Psoas muscle (tissue), 8 donors: ENCODE measurements at regions of chr17 and their contacts with region 1.

Region 1: GRCh38 chr17:51537996-51538550 is 277.7 kb downstream of the UTP18 start:
- DNase-seq: no peak
- ATAC-seq: no peak
- H3K4me3 ChIP-seq: no peak overlapping the region
- H3K27ac ChIP-seq: no peak overlapping the region
- H3K4me1 ChIP-seq: no peaks in the 10 kb centered on the region
- H3K27me3 ChIP-seq: no peaks in the 10 kb centered on the region
- CTCF ChIP-seq: no peak

Region 2: GRCh38 chr17:51298508-51299371 is 239.3 kb before region 1 on chr17:
- intact Hi-C with region 1: loop called in 1 of 2 experiments (anchors 2 kb)
- DNase-seq: no peak
- ATAC-seq: peak in 1 of 4 donors; percentile 60
- H3K4me3 ChIP-seq: no peak overlapping the region
- H3K27ac ChIP-seq: no peak overlapping the region
- H3K4me1 ChIP-seq: no peaks in the 10 kb centered on the region
- H3K27me3 ChIP-seq: no peaks in the 10 kb centered on the region
- CTCF ChIP-seq: peak; percentile 47

Region 3: GRCh38 chr17:51371732-51372151 is 166.3 kb before region 1 on chr17:
- intact Hi-C with region 1: loop called in 1 of 2 experiments (anchors 5 kb)
- DNase-seq: no peak
- ATAC-seq: peak in 1 of 4 donors; percentile 69
- H3K4me3 ChIP-seq: no peak overlapping the region
- H3K27ac ChIP-seq: no peak overlapping the region
- H3K4me1 ChIP-seq: no peaks in the 10 kb centered on the region
- H3K27me3 ChIP-seq: no peaks in the 10 kb centered on the region
- CTCF ChIP-seq: peak; percentile 39

Region 4: GRCh38 chr17:51461578-51462004 is 76.5 kb before region 1 on chr17:
- intact Hi-C with region 1: loop called in 1 of 2 experiments (anchors 5 kb)
- DNase-seq: peak; percentile 53 to 66
- ATAC-seq: peak; percentile 65 to 84 (median 76)
- H3K4me3 ChIP-seq: no peak overlapping the region
- H3K27ac ChIP-seq: no peak overlapping the region
- H3K4me1 ChIP-seq: no peaks in the 10 kb centered on the region
- H3K27me3 ChIP-seq: no peaks in the 10 kb centered on the region
- CTCF ChIP-seq: peak; percentile 64

Region 5: GRCh38 chr17:51640108-51640622 is 102.1 kb after region 1 on chr17:
- intact Hi-C with region 1: no loop called
- DNase-seq: no peak
- ATAC-seq: peak in 3 of 4 donors; percentile 59 to 78 (median 77)
- H3K4me3 ChIP-seq: no peak overlapping the region
- H3K27ac ChIP-seq: no peak overlapping the region
- H3K4me1 ChIP-seq: no peaks in the 10 kb centered on the region
- H3K27me3 ChIP-seq: no peaks in the 10 kb centered on the region
- CTCF ChIP-seq: peak; percentile 48